Activated CD8-positive, alpha-beta T cell treated with anti-CD3 and anti-CD28 coated beads for 36 hours (primary cell): ENCODE measurements at regions of chr1 and their contacts with region 1.

Region 1: DNA sequence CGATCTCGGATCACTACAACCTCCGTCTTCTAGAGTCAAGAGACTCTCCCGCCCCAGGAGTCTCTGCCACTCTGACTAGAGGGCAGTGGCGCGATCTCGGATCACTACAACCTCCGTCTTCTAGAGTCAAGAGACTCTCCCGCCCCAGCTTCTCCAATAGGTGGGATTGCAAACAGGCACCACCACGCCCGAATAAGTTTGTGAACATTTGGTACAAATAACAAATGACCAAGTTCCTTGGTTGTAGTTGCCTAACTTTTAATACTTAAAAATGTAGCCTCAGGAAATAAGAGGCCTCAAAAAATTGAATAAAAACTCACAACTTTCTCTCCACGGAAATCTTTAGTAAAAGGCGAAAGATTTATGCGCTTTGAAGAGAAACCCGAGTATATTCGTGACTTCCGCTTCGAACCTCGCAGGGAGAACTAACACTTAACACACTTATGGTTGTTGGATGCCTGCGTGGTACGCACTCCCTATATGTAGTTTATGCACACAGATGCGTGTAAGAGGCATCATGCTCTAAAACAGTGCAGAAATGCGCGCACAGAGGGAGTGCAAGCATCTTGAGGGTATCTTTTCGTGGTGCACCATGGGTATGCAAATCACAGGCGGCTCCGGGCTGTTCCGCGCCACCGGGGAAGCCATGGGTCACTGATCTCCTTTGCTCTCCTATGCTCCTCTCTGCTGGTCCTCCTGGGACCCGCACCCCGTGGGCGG is 11.4 kb downstream of the BTBD19 start:
- DNase-seq: peak; percentile 93
- ATAC-seq: peak; percentile 91
- H3K4me3 Mint-ChIP-seq: peak overlapping the region; percentile 79
- H3K27ac Mint-ChIP-seq: peak overlapping the region; percentile 99
- H3K4me1 Mint-ChIP-seq: peaks cover 33% of the 10 kb centered on the region
- H3K27me3 Mint-ChIP-seq: no peaks in the 10 kb centered on the region
- CTCF ChIP-seq: no peak

Region 2: GRCh38 chr1:44775078-44775929 is 44.5 kb before region 1 on chr1 and contains the start of gene RPS8:
- CTCF ChIA-PET with region 1: interaction called, 7 read pairs
- POLR2A ChIA-PET with region 1: interaction called, 126 read pairs
- intact Hi-C with region 1: loop called (anchors 5 kb)
- DNase-seq: peak; percentile 95
- ATAC-seq: peak; percentile 79
- H3K4me3 Mint-ChIP-seq: peak within 1 kb of the TSS; percentile 91
- H3K27ac Mint-ChIP-seq: peak within 1 kb of the TSS; percentile 96
- H3K4me1 Mint-ChIP-seq: peaks cover 35% of the 10 kb centered on the region
- H3K27me3 Mint-ChIP-seq: no peaks in the 10 kb centered on the region
- CTCF ChIP-seq: no peak
- total RNA-seq, gene RPS8: 3,218 to 3,314 TPM

Region 3: DNA sequence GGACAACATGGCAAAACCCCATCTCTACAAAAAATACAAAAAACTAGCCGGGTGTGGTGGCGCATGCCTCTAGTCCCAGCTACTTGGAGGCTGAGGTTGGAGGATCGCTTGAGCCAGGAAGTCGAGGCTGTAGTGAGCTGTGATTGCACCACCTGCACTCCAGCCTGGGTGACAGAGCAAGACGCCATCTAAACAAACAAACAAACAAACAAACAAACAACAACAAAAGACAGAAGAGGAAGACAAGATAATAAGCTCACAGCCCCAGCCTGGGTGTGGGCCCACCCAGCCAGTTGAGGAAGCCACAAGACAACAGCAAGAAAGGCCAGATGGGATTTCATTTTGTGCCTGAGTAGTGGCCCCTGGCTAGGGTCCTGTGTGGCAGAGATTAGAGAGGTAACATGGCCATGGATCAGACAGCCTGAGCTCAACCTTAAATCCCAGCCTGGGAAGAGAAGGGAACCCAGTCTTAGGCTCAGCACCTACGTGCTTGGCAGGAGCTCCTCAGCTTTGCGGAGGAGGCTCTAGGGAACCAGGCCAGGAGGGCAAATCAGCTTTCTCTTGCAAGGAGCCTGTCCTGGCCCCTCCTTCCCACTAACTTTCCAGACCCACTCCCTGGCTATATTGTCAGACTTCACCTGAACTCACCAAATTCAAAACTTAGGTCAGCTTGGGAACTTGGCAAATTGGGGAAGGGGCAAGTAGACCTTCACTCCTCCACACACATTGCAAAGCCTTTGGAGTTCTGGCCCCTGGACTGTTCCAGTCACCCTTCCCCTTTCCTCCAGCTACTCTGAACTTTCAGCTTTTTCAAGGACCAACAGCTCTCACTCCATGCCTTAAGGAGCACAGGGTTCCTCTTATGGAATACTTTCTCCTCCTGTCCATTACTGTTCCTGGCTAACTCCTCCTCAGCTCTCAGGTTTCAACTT is 26.7 kb before region 1 on chr1:
- CTCF ChIA-PET with region 1: interaction called, 9 read pairs
- POLR2A ChIA-PET with region 1: interaction called, 130 read pairs
- intact Hi-C with region 1: no loop called
- DNase-seq: peak; percentile 1
- ATAC-seq: no peak
- H3K4me3 Mint-ChIP-seq: no peak overlapping the region
- H3K27ac Mint-ChIP-seq: no peak overlapping the region
- H3K4me1 Mint-ChIP-seq: no peaks in the 10 kb centered on the region
- H3K27me3 Mint-ChIP-seq: no peaks in the 10 kb centered on the region
- CTCF ChIP-seq: no peak

Region 4: GRCh38 chr1:44807262-44808062 is 12.3 kb before region 1 on chr1 and contains the start of gene DYNLT4:
- CTCF ChIA-PET with region 1: interaction called, 7 read pairs
- POLR2A ChIA-PET with region 1: interaction called, 214 read pairs
- intact Hi-C with region 1: no loop called
- DNase-seq: peak; percentile 97
- ATAC-seq: peak; percentile 59
- H3K4me3 Mint-ChIP-seq: peak within 1 kb of the TSS; percentile 55
- H3K27ac Mint-ChIP-seq: peak within 1 kb of the TSS; percentile 99
- H3K4me1 Mint-ChIP-seq: peaks cover 89% of the 10 kb centered on the region
- H3K27me3 Mint-ChIP-seq: no peaks in the 10 kb centered on the region
- CTCF ChIP-seq: no peak
- total RNA-seq, gene DYNLT4: 0.36 to 1.1 TPM

Region 5: GRCh38 chr1:45011837-45012638 is 192.3 kb after region 1 on chr1 and contains the start of gene UROD:
- CTCF ChIA-PET with region 1: interaction called, 5 read pairs
- POLR2A ChIA-PET with region 1: interaction called, 37 read pairs
- intact Hi-C with region 1: no loop called
- DNase-seq: peak; percentile 98
- ATAC-seq: peak; percentile 85
- H3K4me3 Mint-ChIP-seq: peak within 1 kb of the TSS; percentile 77
- H3K27ac Mint-ChIP-seq: peak within 1 kb of the TSS; percentile 92
- H3K4me1 Mint-ChIP-seq: peaks cover 31% of the 10 kb centered on the region
- H3K27me3 Mint-ChIP-seq: no peaks in the 10 kb centered on the region
- CTCF ChIP-seq: no peak
- total RNA-seq, gene UROD: 109 to 113 TPM

Region 6: DNA sequence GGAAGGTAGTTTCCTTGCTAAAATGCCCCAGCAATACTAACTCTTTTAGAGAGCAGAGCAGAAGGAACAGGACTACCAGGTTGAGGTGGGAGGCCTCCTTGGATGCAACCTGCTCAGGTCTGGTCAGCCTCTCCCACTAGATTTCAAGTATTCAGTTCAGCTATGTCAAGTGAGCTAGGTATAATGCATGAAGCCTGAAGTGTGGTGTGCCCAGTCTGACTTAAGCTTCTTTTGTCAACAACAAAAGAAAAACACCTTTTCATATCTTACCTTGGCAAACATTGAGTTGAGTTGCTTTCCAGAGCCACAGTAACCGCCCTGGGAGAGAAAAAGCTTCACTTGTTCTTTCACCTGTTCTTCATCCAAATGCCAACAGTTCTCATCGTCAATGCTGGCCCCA is 240.1 kb after region 1 on chr1:
- CTCF ChIA-PET with region 1: no interaction called
- POLR2A ChIA-PET with region 1: no interaction called
- intact Hi-C with region 1: no loop called
- DNase-seq: no peak
- ATAC-seq: no peak
- H3K4me3 Mint-ChIP-seq: no peak overlapping the region
- H3K27ac Mint-ChIP-seq: no peak overlapping the region
- H3K4me1 Mint-ChIP-seq: no peaks in the 10 kb centered on the region
- H3K27me3 Mint-ChIP-seq: no peaks in the 10 kb centered on the region
- CTCF ChIP-seq: no peak

Region 7: DNA sequence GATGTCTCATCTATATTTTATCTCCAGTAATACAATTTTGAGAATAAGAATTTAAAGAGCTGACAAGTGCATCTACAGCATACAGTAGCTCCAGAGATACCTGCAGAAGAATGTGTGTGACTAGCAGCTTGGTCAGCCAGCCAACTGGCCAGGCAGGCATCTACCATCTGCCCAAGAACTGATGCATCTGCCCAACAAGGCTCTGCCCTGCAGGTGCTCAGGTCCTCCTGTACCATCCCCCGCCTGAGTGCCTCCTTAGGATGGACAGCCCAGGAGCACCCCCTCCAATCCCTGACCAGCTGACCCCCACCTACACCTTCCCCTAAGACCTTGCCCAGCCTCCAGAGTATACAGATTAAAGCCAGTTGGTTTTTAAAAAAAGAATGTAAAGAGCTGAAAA is 898.5 kb after region 1 on chr1:
- CTCF ChIA-PET with region 1: no interaction called
- POLR2A ChIA-PET with region 1: no interaction called
- intact Hi-C with region 1: no loop called
- DNase-seq: no peak
- ATAC-seq: no peak
- H3K4me3 Mint-ChIP-seq: no peak overlapping the region
- H3K27ac Mint-ChIP-seq: no peak overlapping the region
- H3K4me1 Mint-ChIP-seq: no peaks in the 10 kb centered on the region
- H3K27me3 Mint-ChIP-seq: no peaks in the 10 kb centered on the region
- CTCF ChIP-seq: no peak